CD8-positive, alpha-beta memory T cell (primary cell): ENCODE measurements at regions of chr2 and their contacts with region 1.

Region 1: DNA sequence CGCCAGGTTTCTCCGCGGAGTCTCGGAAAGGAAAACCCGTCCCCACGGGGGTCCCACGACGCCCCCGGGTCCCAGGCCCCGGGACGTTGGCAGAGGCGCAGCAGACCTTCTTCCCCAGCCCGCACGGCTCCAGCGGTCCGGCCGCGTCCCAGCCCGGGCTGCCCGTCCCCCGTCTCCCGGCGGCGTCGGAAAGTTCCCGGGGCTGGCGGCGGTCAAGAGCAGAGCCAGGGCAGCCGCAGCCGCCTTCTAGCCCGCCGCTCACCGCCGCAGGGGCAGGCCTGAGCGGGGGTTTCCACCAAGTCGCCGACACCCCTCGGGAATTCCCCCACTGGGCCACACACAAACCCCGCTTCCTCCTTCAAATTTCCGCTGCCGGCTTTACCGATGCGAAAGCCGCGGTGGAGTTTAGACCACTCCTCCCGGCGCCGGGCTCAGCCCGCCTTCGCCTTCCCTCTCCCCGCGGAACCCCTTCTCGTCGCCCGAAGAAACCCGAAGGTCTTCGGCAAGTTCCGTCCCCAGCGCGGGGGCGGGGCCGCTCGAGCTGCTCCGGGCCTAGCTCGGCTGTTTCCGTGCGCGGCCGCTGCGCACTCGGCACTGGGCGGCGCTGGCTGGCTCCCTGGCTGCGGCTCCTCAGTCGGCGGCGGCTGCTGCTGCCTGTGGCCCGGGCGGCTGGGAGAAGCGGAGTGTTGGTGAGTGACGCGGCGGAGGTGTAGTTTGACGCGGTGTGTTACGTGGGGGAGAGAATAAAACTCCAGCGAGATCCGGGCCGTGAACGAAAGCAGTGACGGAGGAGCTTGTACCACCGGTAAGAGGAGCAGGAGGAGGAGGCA is at the start of gene CREB1:
- DNase-seq: peak; percentile 99 to 100 (median 100)
- H3K4me3 ChIP-seq: peak within 1 kb of the TSS; percentile 86
- H3K4me3 Mint-ChIP-seq: peak within 1 kb of the TSS; percentile 91 to 99 (median 96)
- H3K27ac ChIP-seq: peak within 1 kb of the TSS; percentile 99
- H3K27ac Mint-ChIP-seq: peak within 1 kb of the TSS; percentile 99 to 100 (median 100)
- H3K4me1 ChIP-seq: peaks cover 70% of the 10 kb centered on the region
- H3K4me1 Mint-ChIP-seq: peaks cover 64 to 77% (median 70%) of the 10 kb centered on the region in 3 donors
- H3K27me3 ChIP-seq: no peaks in the 10 kb centered on the region
- H3K27me3 Mint-ChIP-seq: peaks cover 0 to 12% of the 10 kb centered on the region in 2 donors
- total RNA-seq, gene CREB1: 95.4 to 96.2 TPM

Region 2: GRCh38 chr2:207540431-207540830 is 10.9 kb after region 1 on chr2:
- CTCF ChIA-PET with region 1: interaction called, 8 read pairs
- POLR2A ChIA-PET with region 1: interaction called, 17 read pairs
- DNase-seq: no peak
- H3K4me3 ChIP-seq: no peak overlapping the region
- H3K4me3 Mint-ChIP-seq: no peak overlapping the region
- H3K27ac ChIP-seq: no peak overlapping the region
- H3K27ac Mint-ChIP-seq: peak overlapping the region in 4 of 8 donors; percentile 32 to 75 (median 39)
- H3K4me1 ChIP-seq: peaks cover 75% of the 10 kb centered on the region
- H3K4me1 Mint-ChIP-seq: peaks cover 64 to 91% (median 77%) of the 10 kb centered on the region in 3 donors
- H3K27me3 ChIP-seq: no peaks in the 10 kb centered on the region
- H3K27me3 Mint-ChIP-seq: no peaks in the 10 kb centered on the region

Region 3: GRCh38 chr2:207625018-207625907 is 95.7 kb after region 1 on chr2 and contains the start of gene METTL21A:
- CTCF ChIA-PET with region 1: interaction called, 31 read pairs
- POLR2A ChIA-PET with region 1: interaction called, 109 read pairs
- DNase-seq: peak; percentile 90 to 97 (median 96)
- H3K4me3 ChIP-seq: peak within 1 kb of the TSS; percentile 98
- H3K4me3 Mint-ChIP-seq: peak within 1 kb of the TSS; percentile 93 to 100 (median 96)
- H3K27ac ChIP-seq: peak within 1 kb of the TSS; percentile 95
- H3K27ac Mint-ChIP-seq: peak within 1 kb of the TSS; percentile 93 to 99 (median 96)
- H3K4me1 ChIP-seq: peaks cover 26% of the 10 kb centered on the region
- H3K4me1 Mint-ChIP-seq: peaks cover 28 to 48% (median 35%) of the 10 kb centered on the region in 3 donors
- H3K27me3 ChIP-seq: no peaks in the 10 kb centered on the region
- H3K27me3 Mint-ChIP-seq: peaks cover 0 to 3% of the 10 kb centered on the region in 2 donors
- total RNA-seq, gene METTL21A: 31.5 to 32.8 TPM

Region 4: DNA sequence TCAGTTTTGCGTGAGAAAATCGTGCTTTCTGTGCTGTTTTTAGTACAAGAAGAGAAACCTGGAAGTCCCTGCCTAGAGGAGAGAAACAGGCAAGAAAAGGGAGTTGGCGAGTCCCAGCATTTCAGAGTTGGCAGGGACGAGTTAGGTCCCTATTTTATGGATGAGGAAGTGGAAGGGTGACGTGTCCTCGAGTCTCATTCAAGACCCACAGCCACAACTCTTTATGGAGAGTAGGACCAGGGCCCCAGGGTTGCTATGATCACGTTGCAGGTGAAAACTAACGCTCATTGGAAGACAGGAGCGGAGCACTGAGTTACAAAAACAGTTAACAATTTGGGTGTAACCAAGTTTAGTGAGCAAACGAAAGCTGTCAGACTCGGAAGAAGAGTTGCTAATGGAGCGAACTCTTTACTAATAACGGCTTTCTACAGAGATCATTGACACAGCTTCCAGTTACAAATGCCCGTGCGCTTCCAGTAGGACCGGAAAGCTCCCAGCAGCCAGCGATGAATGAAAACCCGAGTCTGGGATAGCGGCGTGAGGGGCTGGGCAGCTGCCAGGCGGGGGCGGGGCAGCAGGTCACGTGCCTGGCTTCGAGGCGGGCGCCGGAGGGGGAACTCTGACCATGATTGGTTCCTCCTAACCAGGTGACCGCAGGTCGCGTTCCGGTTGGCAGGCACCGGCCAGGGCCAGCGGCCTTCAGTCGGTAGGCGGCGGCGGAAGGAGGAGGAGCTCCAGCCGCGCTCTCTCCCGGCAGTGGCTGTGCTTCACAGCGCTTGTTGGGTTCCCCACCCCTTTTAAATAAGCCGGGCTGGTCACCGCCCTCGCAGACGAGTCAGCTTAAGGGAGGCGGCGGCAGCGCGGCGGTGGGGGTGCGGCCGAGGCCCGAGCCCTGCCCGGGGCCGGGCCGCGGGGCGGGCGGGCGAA is 181.5 kb after region 1 on chr2 and contains the start of gene CCNYL1:
- CTCF ChIA-PET with region 1: interaction called, 4 read pairs
- POLR2A ChIA-PET with region 1: interaction called, 36 read pairs
- DNase-seq: peak; percentile 97 to 99 (median 98)
- H3K4me3 ChIP-seq: peak within 1 kb of the TSS; percentile 95
- H3K4me3 Mint-ChIP-seq: peak within 1 kb of the TSS; percentile 89 to 98 (median 97)
- H3K27ac ChIP-seq: peak within 1 kb of the TSS; percentile 75
- H3K27ac Mint-ChIP-seq: peak within 1 kb of the TSS; percentile 66 to 97 (median 92)
- H3K4me1 ChIP-seq: peaks cover 13% of the 10 kb centered on the region
- H3K4me1 Mint-ChIP-seq: peaks cover 18 to 30% (median 28%) of the 10 kb centered on the region in 3 donors
- H3K27me3 ChIP-seq: no peaks in the 10 kb centered on the region
- H3K27me3 Mint-ChIP-seq: peaks cover 0 to 2% of the 10 kb centered on the region in 2 donors
- total RNA-seq, gene CCNYL1: 6.1 to 7.2 TPM

Region 5: DNA sequence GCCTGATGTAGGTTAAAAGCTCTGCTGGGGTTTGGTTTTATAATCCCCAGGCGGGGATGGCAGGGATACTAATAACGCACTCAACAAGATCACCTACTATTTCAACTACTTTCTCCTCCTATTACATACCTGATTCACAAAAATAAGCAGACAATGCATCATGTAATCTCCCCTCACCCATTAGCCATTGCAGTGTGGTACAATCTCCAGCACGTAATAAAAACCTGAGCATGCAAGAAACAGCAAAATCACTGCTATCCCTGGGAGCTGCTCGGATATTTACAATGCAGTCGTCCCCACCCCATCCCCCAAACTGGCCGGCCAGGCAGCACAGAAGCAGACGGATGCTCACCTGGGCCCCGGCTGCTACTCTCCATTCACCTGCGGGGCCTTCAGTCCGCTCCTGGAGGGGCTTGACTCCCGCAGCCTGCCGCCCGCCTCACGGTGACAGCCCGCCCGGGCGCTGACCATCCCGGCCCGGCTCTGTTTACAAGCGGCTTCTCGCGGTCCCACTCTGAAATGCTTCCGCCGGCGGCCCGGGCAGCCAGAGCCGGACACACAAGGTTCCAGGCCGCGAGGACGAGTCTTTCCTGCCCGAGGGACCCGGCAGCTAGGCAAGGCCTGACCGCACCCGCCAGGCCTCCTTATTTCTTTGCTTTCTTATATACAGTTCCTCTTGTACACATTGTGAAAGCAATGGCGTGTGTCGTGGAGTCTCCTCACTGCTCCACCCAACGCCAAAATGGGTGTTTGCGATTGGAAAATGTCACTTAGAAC is 495.7 kb after region 1 on chr2 and contains the start of gene PLEKHM3:
- CTCF ChIA-PET with region 1: no interaction called
- POLR2A ChIA-PET with region 1: interaction called, 13 read pairs
- DNase-seq: peak; percentile 46 to 73 (median 57)
- H3K4me3 ChIP-seq: peak within 1 kb of the TSS; percentile 79
- H3K4me3 Mint-ChIP-seq: peak within 1 kb of the TSS; percentile 90 to 100 (median 97)
- H3K27ac ChIP-seq: peak within 1 kb of the TSS; percentile 68
- H3K27ac Mint-ChIP-seq: peak within 1 kb of the TSS; percentile 79 to 96 (median 94)
- H3K4me1 ChIP-seq: no peaks in the 10 kb centered on the region
- H3K4me1 Mint-ChIP-seq: peaks cover 26 to 40% (median 37%) of the 10 kb centered on the region in 3 donors
- H3K27me3 ChIP-seq: no peaks in the 10 kb centered on the region
- H3K27me3 Mint-ChIP-seq: no peaks in the 10 kb centered on the region
- total RNA-seq, gene PLEKHM3: 6.9 to 7.2 TPM